ENCODE measurements at regions of chr18 and their contacts with region 1.

Region 1: GRCh38 chr18:63523660-63524059 is 18.5 kb upstream of the SERPINB12 start:
- DNase-seq: no peak
- ATAC-seq: no peak
- H3K4me3 ChIP-seq: no peak overlapping the region
- H3K27ac ChIP-seq: no peak overlapping the region
- H3K4me1 ChIP-seq: no peaks in the 10 kb centered on the region
- H3K27me3 ChIP-seq: no peaks in the 10 kb centered on the region
- CTCF ChIP-seq: no peak
- POLR2A ChIP-seq: no peak

Region 2: DNA sequence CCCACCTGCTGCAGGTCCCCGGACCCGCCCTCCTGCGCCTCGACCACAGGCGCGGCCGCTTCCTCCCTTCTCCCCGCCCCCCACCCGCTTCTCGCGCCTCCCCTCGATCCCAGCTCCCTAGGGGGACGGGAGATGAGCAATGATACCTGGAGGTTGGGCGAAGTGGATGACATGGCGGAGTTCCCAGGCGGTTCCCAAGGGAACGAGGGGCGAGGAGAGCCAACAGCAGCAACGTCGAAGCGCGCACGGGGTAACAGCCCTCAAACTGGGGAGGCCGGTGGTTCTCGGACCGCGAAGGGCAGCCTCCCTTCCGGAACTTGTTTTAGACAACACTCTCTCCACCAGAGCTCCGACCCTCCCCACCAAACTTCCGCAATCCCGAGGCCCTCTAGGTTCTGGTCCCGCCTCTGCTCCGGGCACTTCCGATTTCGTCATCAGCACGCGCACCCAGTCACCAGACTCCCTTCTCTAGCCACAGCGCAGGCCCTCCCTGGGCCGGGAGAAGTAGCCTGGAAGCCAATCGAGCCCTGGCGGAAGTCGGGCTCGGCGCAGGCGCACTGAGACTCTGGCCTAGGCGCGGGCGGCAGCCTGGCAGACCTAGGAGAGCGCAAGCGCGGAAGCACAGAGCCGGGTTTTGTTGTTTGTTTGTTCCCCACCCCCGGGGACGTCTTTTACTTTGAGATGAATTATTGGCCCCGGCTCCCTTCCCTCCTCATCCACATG is 101.4 kb before region 1 on chr18 and contains the start of gene VPS4B:
- in situ Hi-C with region 1: no loop called
- intact Hi-C with region 1: no loop called
- DNase-seq: peak; percentile 98 to 99
- ATAC-seq: peak; percentile 99
- H3K4me3 ChIP-seq: peak within 1 kb of the TSS; percentile 93 to 96 (median 94)
- H3K27ac ChIP-seq: peak within 1 kb of the TSS; percentile 88 to 97 (median 93)
- H3K4me1 ChIP-seq: peaks cover 14 to 16% of the 10 kb centered on the region in 2 donors
- H3K27me3 ChIP-seq: no peaks in the 10 kb centered on the region
- CTCF ChIP-seq: peak in 1 of 5 experiments; percentile 20
- POLR2A ChIP-seq: peak; percentile 81 to 84
- total RNA-seq, gene VPS4B: 13.4 to 18.2 (median 16.0) TPM

Region 3: GRCh38 chr18:63578357-63578958 is 54.8 kb after region 1 on chr18:
- in situ Hi-C with region 1: loop called in 1 of 4 experiments (anchors 10 kb)
- intact Hi-C with region 1: loop called (anchors 2 kb)
- DNase-seq: no peak
- ATAC-seq: no peak
- H3K4me3 ChIP-seq: no peak overlapping the region
- H3K27ac ChIP-seq: no peak overlapping the region
- H3K4me1 ChIP-seq: no peaks in the 10 kb centered on the region
- H3K27me3 ChIP-seq: no peaks in the 10 kb centered on the region
- CTCF ChIP-seq: peak in 3 of 5 experiments; percentile 28 to 60 (median 58)
- POLR2A ChIP-seq: no peak

Measured in gastrocnemius medialis (tissue), 4 donors.